HCT116 (cell line): ENCODE measurements at regions of chr3 and their contacts with region 1.

Region 1: DNA sequence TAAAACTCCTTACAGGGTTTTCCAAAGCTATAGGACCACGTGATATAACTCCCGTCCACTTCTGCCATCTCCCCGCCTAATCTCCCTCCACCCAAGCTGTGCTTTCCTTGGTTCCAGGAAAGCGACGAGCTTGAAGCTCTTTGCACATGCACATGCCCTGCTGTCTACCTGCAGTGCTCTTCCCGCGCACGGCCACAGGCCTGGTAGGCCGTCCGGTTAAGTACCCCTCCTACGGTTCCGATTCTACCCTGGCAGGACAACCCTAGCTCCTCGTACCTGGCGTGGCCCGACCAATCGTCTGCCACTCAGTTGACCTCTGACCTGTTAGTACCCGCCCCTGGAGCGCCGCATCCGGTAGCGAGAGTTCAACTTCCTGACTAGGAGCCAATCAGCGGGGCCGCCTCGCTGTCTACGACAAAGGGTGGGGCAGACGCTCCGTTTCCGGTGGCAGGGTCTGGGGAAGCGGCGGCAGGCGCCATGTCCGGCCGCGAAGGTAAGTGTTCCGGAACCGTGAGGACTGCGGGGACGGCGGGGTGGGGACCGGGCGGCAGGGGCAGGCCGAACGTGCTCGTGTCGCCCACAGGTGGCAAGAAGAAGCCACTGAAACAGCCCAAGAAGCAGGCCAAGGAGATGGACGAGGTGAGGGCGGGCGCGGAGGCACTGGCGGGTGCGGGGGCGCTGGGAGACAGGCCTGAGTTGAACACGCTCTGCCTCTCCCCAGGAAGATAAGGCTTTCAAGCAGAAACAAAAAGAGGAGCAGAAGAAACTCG is at the starts of genes CCDC51 and TMA7:
- DNase-seq: peak; percentile 96
- ATAC-seq: peak; percentile 91
- H3K4me3 ChIP-seq: peak within 1 kb of the TSS; percentile 98 to 100
- H3K27ac ChIP-seq: peak within 1 kb of the TSS; percentile 71
- H3K4me1 ChIP-seq: peaks cover 14 to 36% of the 10 kb centered on the region in 2 experiments
- H3K27me3 ChIP-seq: no peaks in the 10 kb centered on the region
- CTCF ChIP-seq: no peak
- POLR2A ChIP-seq: peak; percentile 68
- RAD21 ChIP-seq: no peak
- total RNA-seq, gene CCDC51: 29.3 TPM
- total RNA-seq, gene TMA7: 334 TPM

Region 2: GRCh38 chr3:48157950-48158376 is 282.0 kb before region 1 on chr3:
- CTCF ChIA-PET with region 1: interaction called, 12 read pairs
- POLR2A ChIA-PET with region 1: interaction called, 3 read pairs
- RAD21 ChIA-PET with region 1: no interaction called
- intact Hi-C with region 1: no loop called
- DNase-seq: peak; percentile 48
- ATAC-seq: peak; percentile 63
- H3K4me3 ChIP-seq: no peak overlapping the region
- H3K27ac ChIP-seq: peak overlapping the region; percentile 51; the same call in 1 of the 2 replicates
- H3K4me1 ChIP-seq: peaks cover 36 to 55% of the 10 kb centered on the region in 2 experiments
- H3K27me3 ChIP-seq: no peaks in the 10 kb centered on the region
- CTCF ChIP-seq: peak; percentile 47 to 92 (median 86); a peak in 5 of 6 replicates
- POLR2A ChIP-seq: no peak
- RAD21 ChIP-seq: peak; percentile 74

Region 3: DNA sequence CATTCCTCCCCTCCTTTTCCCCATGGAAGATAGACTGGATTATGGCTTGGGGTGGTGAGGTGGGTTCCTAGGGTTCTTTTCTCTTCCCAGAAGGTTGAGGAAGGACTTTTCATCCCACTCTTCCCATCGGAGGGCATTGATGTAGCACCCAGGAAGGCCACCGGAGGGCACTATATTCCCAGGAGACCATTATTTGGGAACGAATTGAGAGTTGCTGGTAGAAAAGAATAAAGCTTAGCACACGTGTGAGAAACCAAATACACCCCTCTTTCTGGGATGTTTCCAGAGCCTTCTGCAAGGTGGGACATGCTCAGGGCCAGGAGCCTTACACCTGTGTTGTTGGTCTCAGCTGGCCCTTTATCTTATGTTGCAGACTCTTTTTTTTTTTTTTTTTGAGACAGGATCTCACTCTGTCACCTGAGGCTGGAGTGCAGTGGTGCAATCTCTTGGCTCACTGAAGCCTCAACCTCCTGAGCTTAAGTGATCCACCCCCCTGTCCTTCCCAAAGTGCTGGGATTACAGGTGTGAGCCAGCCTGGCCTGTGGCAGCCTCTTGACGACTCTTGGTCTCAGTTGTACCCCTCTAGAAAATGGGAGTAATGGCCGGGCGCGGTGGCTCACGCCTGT is 245.4 kb before region 1 on chr3:
- CTCF ChIA-PET with region 1: interaction called, 99 read pairs
- POLR2A ChIA-PET with region 1: interaction called, 11 read pairs
- RAD21 ChIA-PET with region 1: interaction called, 8 to 14 read pairs
- intact Hi-C with region 1: loop called (anchors 1 kb)
- DNase-seq: peak; percentile 48
- ATAC-seq: peak; percentile 90
- H3K4me3 ChIP-seq: no peak overlapping the region
- H3K27ac ChIP-seq: no peak overlapping the region
- H3K4me1 ChIP-seq: peaks cover 5 to 16% of the 10 kb centered on the region in 2 experiments; a peak in 3 of 4 replicates
- H3K27me3 ChIP-seq: no peaks in the 10 kb centered on the region
- CTCF ChIP-seq: peak; percentile 81 to 94 (median 90); a peak in 5 of 6 replicates
- POLR2A ChIP-seq: no peak
- RAD21 ChIP-seq: peak; percentile 87

Region 4: GRCh38 chr3:48240711-48241491 is 199.1 kb before region 1 on chr3 and contains the start of gene ZNF589:
- CTCF ChIA-PET with region 1: interaction called, 14 read pairs
- POLR2A ChIA-PET with region 1: interaction called, 5 read pairs
- RAD21 ChIA-PET with region 1: no interaction called
- intact Hi-C with region 1: no loop called
- DNase-seq: peak; percentile 89
- ATAC-seq: peak; percentile 97
- H3K4me3 ChIP-seq: peak within 1 kb of the TSS; percentile 86 to 94
- H3K27ac ChIP-seq: peak within 1 kb of the TSS; percentile 76
- H3K4me1 ChIP-seq: peaks cover 11 to 23% of the 10 kb centered on the region in 2 experiments
- H3K27me3 ChIP-seq: no peaks in the 10 kb centered on the region
- CTCF ChIP-seq: no peak
- POLR2A ChIP-seq: peak; percentile 88
- RAD21 ChIP-seq: no peak
- total RNA-seq, gene ZNF589: 15.7 TPM

Region 5: GRCh38 chr3:48280881-48281280 is 159.1 kb before region 1 on chr3:
- CTCF ChIA-PET with region 1: interaction called, 91 read pairs
- POLR2A ChIA-PET with region 1: no interaction called
- RAD21 ChIA-PET with region 1: no interaction called
- intact Hi-C with region 1: no loop called
- DNase-seq: no peak
- ATAC-seq: no peak
- H3K4me3 ChIP-seq: no peak overlapping the region
- H3K27ac ChIP-seq: no peak overlapping the region
- H3K4me1 ChIP-seq: no peaks in the 10 kb centered on the region
- H3K27me3 ChIP-seq: no peaks in the 10 kb centered on the region
- CTCF ChIP-seq: no peak
- POLR2A ChIP-seq: no peak
- RAD21 ChIP-seq: no peak

Region 6: GRCh38 chr3:48408823-48409281 is 31.2 kb before region 1 on chr3:
- CTCF ChIA-PET with region 1: interaction called, 386 read pairs
- POLR2A ChIA-PET with region 1: no interaction called
- RAD21 ChIA-PET with region 1: interaction called in 1 of 2 experiments, 3 read pairs
- intact Hi-C with region 1: no loop called
- DNase-seq: no peak
- ATAC-seq: peak; percentile 63
- H3K4me3 ChIP-seq: no peak overlapping the region
- H3K27ac ChIP-seq: no peak overlapping the region
- H3K4me1 ChIP-seq: peaks cover 0 to 13% of the 10 kb centered on the region in 2 experiments; a peak in 1 of 4 replicates
- H3K27me3 ChIP-seq: no peaks in the 10 kb centered on the region
- CTCF ChIP-seq: peak in 2 of 3 experiments; percentile 18 to 45; a peak in 2 of 6 replicates
- POLR2A ChIP-seq: no peak
- RAD21 ChIP-seq: no peak

Region 7: GRCh38 chr3:48548729-48549705 is 109.0 kb after region 1 on chr3:
- CTCF ChIA-PET with region 1: interaction called, 21 read pairs
- POLR2A ChIA-PET with region 1: interaction called, 3 read pairs
- RAD21 ChIA-PET with region 1: interaction called, 3 read pairs
- intact Hi-C with region 1: no loop called
- DNase-seq: peak; percentile 54
- ATAC-seq: peak; percentile 99
- H3K4me3 ChIP-seq: no peak overlapping the region
- H3K27ac ChIP-seq: no peak overlapping the region
- H3K4me1 ChIP-seq: peaks cover 0 to 6% of the 10 kb centered on the region in 2 experiments; a peak in 1 of 4 replicates
- H3K27me3 ChIP-seq: no peaks in the 10 kb centered on the region
- CTCF ChIP-seq: peak in 2 of 3 experiments; percentile 94 to 98; a peak in 4 of 6 replicates
- POLR2A ChIP-seq: no peak
- RAD21 ChIP-seq: no peak